OCI-LY7 (cell line): ENCODE measurements at regions of chr5 and their contacts with region 1.

Region 1: DNA sequence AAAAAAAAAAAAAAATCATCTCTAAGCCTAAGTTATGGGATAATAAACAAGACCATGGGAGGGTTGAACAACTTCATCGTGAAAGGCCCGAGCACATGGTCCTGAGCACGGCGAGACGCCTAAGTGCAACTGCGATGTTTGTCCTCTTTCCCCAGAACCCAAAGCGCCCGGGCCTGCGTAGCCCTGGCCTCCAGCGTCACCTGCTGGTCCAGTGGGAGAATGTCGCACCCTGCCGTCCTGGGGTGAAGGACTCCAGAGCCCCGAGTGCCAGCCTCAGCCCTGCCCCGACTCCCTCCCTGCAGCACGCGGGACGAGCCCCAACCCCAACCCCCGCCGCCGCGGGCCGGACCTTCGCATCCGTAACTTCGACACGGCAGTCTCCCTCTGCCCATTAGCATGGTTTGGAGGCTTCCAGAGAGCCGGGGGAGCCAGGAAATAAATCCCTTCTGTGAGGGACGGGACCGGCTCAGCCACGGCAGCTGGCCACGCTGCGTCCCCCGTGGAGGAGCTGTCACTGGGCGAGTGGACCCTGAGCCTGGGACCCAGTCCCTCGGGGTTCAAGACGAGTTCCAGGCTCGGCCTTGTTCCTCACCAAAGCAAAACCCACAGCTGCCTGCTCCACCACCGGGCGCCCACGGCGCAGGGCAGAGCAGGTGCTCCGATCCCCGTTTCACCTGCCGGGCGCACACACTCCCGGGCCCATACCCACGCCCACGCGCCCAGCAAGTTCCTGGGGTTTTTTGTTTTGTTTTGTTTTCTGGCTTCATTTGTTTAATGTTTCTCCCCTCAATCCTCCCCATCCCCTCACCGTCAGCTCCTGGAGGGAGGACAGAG is 132.5 kb upstream of the HAND1 start:
- DNase-seq: peak; percentile 58
- H3K4me3 ChIP-seq: no peak overlapping the region
- H3K27ac ChIP-seq: no peak overlapping the region
- H3K4me1 ChIP-seq: no peaks in the 10 kb centered on the region
- CTCF ChIP-seq: peak; percentile 79

Region 2: DNA sequence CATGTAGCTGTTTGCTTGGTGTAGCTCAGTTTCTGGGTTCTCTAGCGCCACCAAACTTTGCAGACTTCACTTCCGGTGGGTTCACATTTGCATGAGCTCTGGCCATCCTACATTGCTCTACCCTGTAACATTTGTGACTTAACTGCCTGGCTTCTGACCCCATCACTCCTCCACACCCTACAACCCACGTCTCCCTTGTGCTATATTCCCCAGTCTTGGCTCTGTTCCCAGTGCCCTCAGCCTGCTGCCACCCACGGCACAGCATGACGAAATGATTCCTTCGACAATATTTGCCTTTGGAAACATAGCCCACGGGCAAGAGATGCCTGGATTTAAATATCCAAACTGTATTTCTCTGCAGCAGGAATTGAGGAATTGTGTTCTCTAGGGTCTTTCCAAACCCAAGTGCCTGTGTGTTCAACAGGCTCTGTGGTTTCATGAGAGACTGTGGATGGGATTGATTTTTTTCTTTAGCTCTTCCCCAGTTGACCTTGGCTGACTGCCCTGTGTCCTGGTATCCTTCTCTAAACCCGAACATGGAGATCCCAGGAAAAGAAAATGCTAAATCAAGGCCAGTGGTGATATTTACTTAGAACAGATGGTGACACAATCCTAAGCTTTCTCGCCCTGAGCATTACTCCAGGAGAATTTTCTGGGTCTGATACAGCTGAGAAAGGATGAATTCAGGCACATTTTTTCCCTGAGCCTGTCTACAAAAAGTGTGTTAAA is 1164.5 kb before region 1 on chr5:
- CTCF ChIA-PET with region 1: no interaction called
- POLR2A ChIA-PET with region 1: interaction called, 10 read pairs
- intact Hi-C with region 1: no loop called
- DNase-seq: no peak
- H3K4me3 ChIP-seq: no peak overlapping the region
- H3K27ac ChIP-seq: no peak overlapping the region
- H3K4me1 ChIP-seq: no peaks in the 10 kb centered on the region
- CTCF ChIP-seq: no peak

Region 3: GRCh38 chr5:153974131-153974812 is 636.3 kb before region 1 on chr5:
- CTCF ChIA-PET with region 1: no interaction called
- POLR2A ChIA-PET with region 1: no interaction called
- intact Hi-C with region 1: loop called (anchors 10 kb)
- DNase-seq: peak; percentile 51
- H3K4me3 ChIP-seq: no peak overlapping the region
- H3K27ac ChIP-seq: no peak overlapping the region
- H3K4me1 ChIP-seq: no peaks in the 10 kb centered on the region
- CTCF ChIP-seq: peak; percentile 93

Region 4: GRCh38 chr5:154072414-154073171 is 537.9 kb before region 1 on chr5:
- CTCF ChIA-PET with region 1: no interaction called
- POLR2A ChIA-PET with region 1: no interaction called
- intact Hi-C with region 1: loop called (anchors 5 kb)
- DNase-seq: peak; percentile 76
- H3K4me3 ChIP-seq: peak overlapping the region; percentile 10
- H3K27ac ChIP-seq: no peak overlapping the region
- H3K4me1 ChIP-seq: no peaks in the 10 kb centered on the region
- CTCF ChIP-seq: peak; percentile 98

Region 5: DNA sequence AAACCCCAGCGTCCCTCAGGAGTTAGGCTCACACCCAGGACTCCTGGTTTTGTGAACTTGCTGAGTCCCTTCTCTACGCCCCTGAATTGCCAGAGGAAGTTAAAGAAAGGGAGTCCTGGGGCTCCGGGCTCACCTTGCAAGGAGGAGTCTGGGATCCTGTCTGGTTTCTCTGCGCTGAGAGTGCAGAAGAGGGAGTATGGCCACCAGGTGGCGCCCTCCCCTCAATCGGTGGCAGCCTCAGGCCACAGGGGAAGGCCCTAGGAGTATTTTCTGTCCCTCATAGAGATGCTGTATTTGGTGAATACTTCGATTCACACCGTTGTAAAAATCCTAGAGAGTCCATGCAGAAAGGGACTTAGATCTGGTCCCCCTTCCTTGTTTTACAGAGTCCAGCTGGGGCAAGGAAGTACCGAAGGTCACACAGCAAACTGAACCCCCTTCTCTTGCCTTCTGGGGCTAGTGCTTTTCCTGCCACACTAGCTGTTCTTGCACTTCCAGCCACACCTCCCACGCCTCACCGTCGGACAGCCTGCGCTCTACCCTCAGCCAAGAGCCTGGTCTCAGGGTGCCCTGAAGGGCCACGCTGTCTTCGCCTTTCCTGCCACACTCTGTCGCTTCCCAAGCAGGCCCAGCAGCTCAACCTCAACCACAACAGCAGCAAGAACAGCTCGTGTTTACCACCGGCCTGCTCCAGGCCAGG is 142.7 kb before region 1 on chr5:
- CTCF ChIA-PET with region 1: no interaction called
- POLR2A ChIA-PET with region 1: interaction called, 3 read pairs
- intact Hi-C with region 1: loop called (anchors 1 kb)
- DNase-seq: peak; percentile 69
- H3K4me3 ChIP-seq: no peak overlapping the region
- H3K27ac ChIP-seq: no peak overlapping the region
- H3K4me1 ChIP-seq: no peaks in the 10 kb centered on the region
- CTCF ChIP-seq: peak; percentile 94

Region 6: DNA sequence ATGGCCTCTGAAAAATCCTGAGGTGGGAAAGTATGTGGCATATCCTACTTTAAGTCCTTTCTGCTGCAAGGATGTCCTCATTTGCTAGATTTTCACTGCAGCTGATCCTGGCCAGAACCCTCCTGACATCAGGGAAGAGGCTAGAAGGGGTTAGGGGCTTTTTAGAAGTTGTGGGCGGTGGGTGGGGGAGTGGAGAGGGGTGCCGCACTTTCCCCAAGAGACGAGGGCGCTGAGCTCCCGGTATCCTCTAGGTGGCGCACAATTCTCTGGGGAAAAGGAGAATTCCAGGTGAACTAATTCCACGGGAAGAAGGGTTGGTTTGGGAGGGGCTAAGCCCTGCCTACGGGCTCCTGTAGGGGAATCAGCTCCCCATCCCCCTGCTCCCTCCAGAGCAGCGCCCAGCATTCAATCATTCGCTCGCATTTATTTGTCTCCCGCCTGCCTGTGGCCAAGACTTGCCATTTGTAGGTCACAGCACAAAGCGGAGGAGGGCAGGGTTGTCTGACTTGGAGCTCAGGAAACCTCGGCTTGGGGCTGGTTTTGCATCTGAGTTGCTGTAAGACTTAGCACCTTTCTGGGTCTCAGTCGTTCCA is 89.6 kb before region 1 on chr5:
- CTCF ChIA-PET with region 1: no interaction called
- POLR2A ChIA-PET with region 1: no interaction called
- intact Hi-C with region 1: loop called (anchors 1 kb)
- DNase-seq: peak; percentile 21
- H3K4me3 ChIP-seq: no peak overlapping the region
- H3K27ac ChIP-seq: no peak overlapping the region
- H3K4me1 ChIP-seq: no peaks in the 10 kb centered on the region
- CTCF ChIP-seq: peak; percentile 91

Region 7: GRCh38 chr5:154541553-154541952 is 69.0 kb before region 1 on chr5:
- CTCF ChIA-PET with region 1: no interaction called
- POLR2A ChIA-PET with region 1: no interaction called
- intact Hi-C with region 1: loop called (anchors 1 kb)
- DNase-seq: peak; percentile 43
- H3K4me3 ChIP-seq: no peak overlapping the region
- H3K27ac ChIP-seq: no peak overlapping the region
- H3K4me1 ChIP-seq: no peaks in the 10 kb centered on the region
- CTCF ChIP-seq: peak; percentile 80

Region 8: DNA sequence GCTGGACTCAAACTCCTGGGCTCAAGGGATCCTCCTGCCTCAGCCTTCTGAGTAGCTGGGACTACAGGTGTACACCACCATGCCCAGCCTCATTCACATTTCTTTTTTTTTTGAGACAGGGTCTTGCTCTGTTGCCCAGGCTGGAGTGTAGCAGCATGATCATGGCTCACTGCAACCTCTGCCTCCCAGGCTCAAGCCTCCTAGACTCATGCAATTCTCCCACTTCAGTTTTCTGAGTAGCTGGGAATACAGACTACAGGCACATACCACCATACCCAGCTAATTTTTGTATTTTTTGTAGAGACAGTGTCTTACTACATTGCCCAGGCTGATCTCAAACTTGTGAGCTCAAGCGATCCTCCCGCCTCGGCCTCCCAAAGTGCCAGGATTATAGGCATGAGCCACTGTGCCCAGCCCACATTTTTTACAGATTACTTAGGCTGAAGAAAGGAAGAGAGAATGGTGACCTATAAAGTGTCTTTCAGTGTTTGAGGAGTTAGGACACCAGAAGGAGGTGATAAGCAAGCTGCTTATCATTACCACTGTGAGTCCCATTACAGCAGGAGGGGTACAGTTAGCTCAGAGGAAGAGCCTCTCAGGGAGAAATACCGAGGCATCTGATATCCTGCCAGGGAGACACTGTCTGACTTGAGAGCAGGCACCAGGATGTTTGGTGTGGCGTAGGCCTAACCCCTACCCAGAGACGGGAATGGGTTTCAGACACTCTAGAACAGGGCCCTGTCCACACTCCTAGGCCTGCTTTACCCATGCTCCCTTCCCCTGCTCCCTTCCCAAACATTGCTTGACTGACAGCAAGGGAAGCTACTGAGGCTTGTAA is 230.1 kb after region 1 on chr5:
- CTCF ChIA-PET with region 1: no interaction called
- POLR2A ChIA-PET with region 1: no interaction called
- intact Hi-C with region 1: no loop called
- DNase-seq: no peak
- H3K4me3 ChIP-seq: no peak overlapping the region
- H3K27ac ChIP-seq: no peak overlapping the region
- H3K4me1 ChIP-seq: no peaks in the 10 kb centered on the region
- CTCF ChIP-seq: no peak